Ascending aorta (tissue), 2 donors: ENCODE measurements at regions of chr1 and their contacts with region 1.

Region 1: GRCh38 chr1:6554031-6554906 is at the start of gene NOL9:
- DNase-seq: peak; percentile 73 to 96
- H3K4me3 ChIP-seq: peak within 1 kb of the TSS; percentile 65 to 98
- H3K27ac ChIP-seq: peak within 1 kb of the TSS; percentile 66 to 70
- H3K4me1 ChIP-seq: peaks cover 9 to 20% of the 10 kb centered on the region in 2 donors
- H3K27me3 ChIP-seq: no peaks in the 10 kb centered on the region
- CTCF ChIP-seq: peak; percentile 96 to 97 (median 97)
- total RNA-seq, gene NOL9: 31.0 TPM

Region 2: DNA sequence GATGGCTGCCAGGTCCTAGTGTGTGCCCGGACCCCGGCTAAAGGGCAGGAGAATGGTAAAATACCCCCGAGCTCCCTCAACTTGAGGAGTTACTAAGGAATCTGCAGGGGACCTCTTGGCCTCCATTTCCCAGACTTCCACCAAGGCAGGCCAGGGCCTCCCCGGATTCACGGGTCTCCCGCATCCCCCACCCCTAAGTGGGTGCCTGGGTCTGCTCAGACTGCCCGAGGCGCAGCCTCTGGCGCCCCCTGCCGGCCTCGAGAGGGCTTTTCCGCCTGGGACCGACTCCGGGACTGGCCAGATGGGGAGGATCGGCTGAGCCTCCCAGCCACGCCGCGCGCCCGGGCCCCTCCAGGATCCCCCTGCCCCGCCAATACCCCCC is 64.5 kb before region 1 on chr1:
- intact Hi-C with region 1: loop called (anchors 2 kb)
- DNase-seq: peak in 1 of 2 donors; percentile 79
- H3K4me3 ChIP-seq: peak overlapping the region; percentile 76 to 85
- H3K27ac ChIP-seq: no peak overlapping the region
- H3K4me1 ChIP-seq: peaks cover 5 to 25% of the 10 kb centered on the region in 2 donors
- H3K27me3 ChIP-seq: no peaks in the 10 kb centered on the region
- CTCF ChIP-seq: peak; percentile 65 to 96 (median 91)

Region 3: DNA sequence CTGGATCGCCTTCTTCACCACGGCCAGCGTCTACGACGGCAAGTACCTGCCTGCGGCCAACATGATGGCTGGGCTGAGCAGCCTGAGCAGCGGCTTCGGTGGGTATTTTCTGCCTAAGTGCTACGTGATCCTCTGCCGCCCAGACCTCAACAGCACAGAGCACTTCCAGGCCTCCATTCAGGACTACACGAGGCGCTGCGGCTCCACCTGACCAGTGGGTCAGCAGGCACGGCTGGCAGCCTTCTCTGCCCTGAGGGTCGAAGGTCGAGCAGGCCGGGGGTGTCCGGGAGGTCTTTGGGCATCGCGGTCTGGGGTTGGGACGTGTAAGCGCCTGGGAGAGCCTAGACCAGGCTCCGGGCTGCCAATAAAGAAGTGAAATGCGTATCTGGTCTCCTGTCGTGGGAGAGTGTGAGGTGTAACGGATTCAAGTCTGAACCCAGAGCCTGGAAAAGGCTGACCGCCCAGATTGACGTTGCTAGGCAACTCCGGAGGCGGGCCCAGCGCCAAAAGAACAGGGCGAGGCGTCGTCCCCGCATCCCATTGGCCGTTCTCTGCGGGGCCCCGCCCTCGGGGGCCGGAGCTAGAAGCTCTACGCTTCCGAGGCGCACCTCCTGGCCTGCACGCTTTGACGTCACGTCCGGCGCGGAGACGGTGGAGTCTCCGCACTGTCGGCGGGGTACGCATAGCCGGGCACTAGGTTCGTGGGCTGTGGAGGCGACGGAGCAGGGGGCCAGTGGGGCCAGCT is 25.3 kb after region 1 on chr1 and contains the start of gene ZBTB48:
- intact Hi-C with region 1: loop called (anchors 1 kb)
- DNase-seq: peak; percentile 95 to 100
- H3K4me3 ChIP-seq: peak within 1 kb of the TSS; percentile 64 to 87
- H3K27ac ChIP-seq: peak within 1 kb of the TSS; percentile 92 to 94
- H3K4me1 ChIP-seq: peaks cover 14 to 23% of the 10 kb centered on the region in 2 donors
- H3K27me3 ChIP-seq: no peaks in the 10 kb centered on the region
- CTCF ChIP-seq: no peak
- total RNA-seq, gene ZBTB48: 106 TPM

Region 4: GRCh38 chr1:6602669-6603237 is 48.5 kb after region 1 on chr1 and contains the start of gene KLHL21:
- intact Hi-C with region 1: loop called (anchors 2 kb)
- DNase-seq: peak; percentile 77 to 96
- H3K4me3 ChIP-seq: peak within 1 kb of the TSS; percentile 92 to 95
- H3K27ac ChIP-seq: peak within 1 kb of the TSS; percentile 98 to 99
- H3K4me1 ChIP-seq: peaks cover 20 to 36% of the 10 kb centered on the region in 2 donors
- H3K27me3 ChIP-seq: no peaks in the 10 kb centered on the region
- CTCF ChIP-seq: no peak
- total RNA-seq, gene KLHL21: 147 TPM

Region 5: DNA sequence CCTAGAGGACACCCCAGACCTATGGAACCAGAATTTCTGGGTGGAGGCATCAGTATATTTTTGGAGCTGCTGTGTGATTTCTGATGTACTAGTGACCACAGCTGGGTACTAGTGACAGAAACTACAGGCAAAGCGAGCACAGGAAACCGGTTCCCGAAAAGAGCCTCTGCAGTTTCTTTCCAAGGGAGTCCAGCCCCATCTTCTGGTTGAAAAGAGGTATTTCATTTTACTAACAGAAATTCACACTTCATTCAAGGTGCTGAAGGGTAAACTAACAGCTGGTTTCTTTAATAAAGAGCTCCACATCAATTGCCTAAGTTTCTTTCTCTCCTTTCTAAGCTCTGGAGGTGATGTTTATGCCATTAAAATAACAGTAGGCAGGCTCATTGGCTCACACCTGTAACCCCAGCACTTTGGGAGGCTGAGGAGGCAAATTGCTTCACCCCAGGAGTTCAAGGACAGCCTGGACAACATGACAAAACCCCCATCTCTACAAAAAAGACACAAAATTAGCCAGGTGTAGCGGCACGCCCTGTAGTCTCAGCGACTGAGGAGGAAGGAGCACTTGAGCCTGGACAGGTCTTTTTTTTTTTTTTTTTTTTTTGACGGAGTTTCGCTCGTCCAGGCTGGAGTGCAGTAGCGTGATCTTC is 92.4 kb after region 1 on chr1:
- intact Hi-C with region 1: loop called (anchors 1 kb)
- DNase-seq: no peak
- H3K4me3 ChIP-seq: no peak overlapping the region
- H3K27ac ChIP-seq: no peak overlapping the region
- H3K4me1 ChIP-seq: no peaks in the 10 kb centered on the region
- H3K27me3 ChIP-seq: no peaks in the 10 kb centered on the region
- CTCF ChIP-seq: peak; percentile 64 to 70 (median 68)